ENCODE measurements at regions of chr11 and their contacts with region 1.

Region 1: GRCh38 chr11:83819933-83820549 is 533.9 kb upstream of the CCDC90B start:
- DNase-seq: peak; percentile 90
- H3K4me3 ChIP-seq: no peak overlapping the region
- H3K27ac ChIP-seq: peak overlapping the region; percentile 39
- H3K4me1 ChIP-seq: peaks cover 38% of the 10 kb centered on the region
- H3K27me3 ChIP-seq: no peaks in the 10 kb centered on the region
- CTCF ChIP-seq: peak; percentile 87

Region 2: DNA sequence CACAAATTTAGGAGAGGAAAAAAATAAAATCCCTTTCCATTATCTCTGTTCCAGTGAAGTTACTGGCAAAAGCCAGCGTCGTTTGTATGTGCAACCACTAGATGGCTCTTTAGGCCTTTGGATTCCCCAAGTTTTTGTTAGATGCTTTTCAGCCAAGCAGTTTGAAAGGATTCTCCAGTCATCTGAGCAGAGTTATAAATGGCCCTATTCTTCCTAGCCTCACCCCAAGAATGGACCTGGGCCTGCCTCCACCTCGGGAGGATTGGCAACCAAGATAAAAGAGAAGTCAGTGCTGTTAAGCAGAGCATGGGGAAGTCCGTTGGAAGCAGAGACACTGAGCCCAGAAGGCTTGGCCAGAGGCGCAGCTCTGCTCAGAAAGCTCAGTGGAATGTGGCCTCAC is 1101.7 kb before region 1 on chr11:
- CTCF ChIA-PET with region 1: no interaction called
- POLR2A ChIA-PET with region 1: no interaction called
- intact Hi-C with region 1: loop called (anchors 2 kb)
- DNase-seq: peak; percentile 69
- H3K4me3 ChIP-seq: no peak overlapping the region
- H3K27ac ChIP-seq: no peak overlapping the region
- H3K4me1 ChIP-seq: no peaks in the 10 kb centered on the region
- H3K27me3 ChIP-seq: peaks cover 1% of the 10 kb centered on the region
- CTCF ChIP-seq: peak; percentile 87

Region 3: DNA sequence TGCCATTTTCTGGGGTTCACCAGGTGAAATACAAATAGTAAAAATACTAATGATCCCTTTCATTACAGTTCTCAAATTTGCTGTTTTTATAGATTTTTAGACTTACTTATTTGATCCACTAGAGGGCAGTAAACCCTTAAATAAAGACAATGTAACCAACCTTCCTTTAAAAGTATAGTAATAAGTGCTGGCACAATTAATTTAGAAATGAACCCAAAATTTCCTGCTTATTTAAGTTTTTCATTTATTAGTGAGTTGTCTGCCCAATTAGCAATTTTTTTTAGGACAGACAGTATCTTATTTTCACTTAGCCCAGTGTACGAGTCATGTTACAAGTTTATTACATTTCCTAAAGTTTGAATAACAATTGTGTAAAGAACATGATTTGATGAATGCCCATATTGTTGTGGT is 913.8 kb before region 1 on chr11:
- CTCF ChIA-PET with region 1: interaction called, 7 read pairs
- POLR2A ChIA-PET with region 1: no interaction called
- intact Hi-C with region 1: loop called (anchors 1 kb)
- DNase-seq: peak; percentile 71
- H3K4me3 ChIP-seq: peak overlapping the region; percentile 6
- H3K27ac ChIP-seq: peak overlapping the region; percentile 3
- H3K4me1 ChIP-seq: peaks cover 26% of the 10 kb centered on the region
- H3K27me3 ChIP-seq: no peaks in the 10 kb centered on the region
- CTCF ChIP-seq: peak; percentile 76

Region 4: GRCh38 chr11:83193315-83194280 is 626.4 kb before region 1 on chr11 and contains the start of gene ANKRD42:
- CTCF ChIA-PET with region 1: no interaction called
- POLR2A ChIA-PET with region 1: no interaction called
- intact Hi-C with region 1: loop called (anchors 1 kb)
- DNase-seq: peak; percentile 99
- H3K4me3 ChIP-seq: peak within 1 kb of the TSS; percentile 90
- H3K27ac ChIP-seq: peak within 1 kb of the TSS; percentile 91
- H3K4me1 ChIP-seq: peaks cover 7% of the 10 kb centered on the region
- H3K27me3 ChIP-seq: no peaks in the 10 kb centered on the region
- CTCF ChIP-seq: no peak
- total RNA-seq, gene ANKRD42: 11.0 and 11.3 TPM in 2 replicates

Region 5: GRCh38 chr11:83285771-83286528 is 534.1 kb before region 1 on chr11 and contains the start of gene CCDC90B:
- CTCF ChIA-PET with region 1: no interaction called
- POLR2A ChIA-PET with region 1: no interaction called
- intact Hi-C with region 1: loop called (anchors 5 kb)
- DNase-seq: peak; percentile 100
- H3K4me3 ChIP-seq: peak within 1 kb of the TSS; percentile 71
- H3K27ac ChIP-seq: peak within 1 kb of the TSS; percentile 94
- H3K4me1 ChIP-seq: peaks cover 33% of the 10 kb centered on the region
- H3K27me3 ChIP-seq: no peaks in the 10 kb centered on the region
- CTCF ChIP-seq: peak; percentile 74; the same call in 1 of the 2 replicates
- total RNA-seq, gene CCDC90B: 51.2 and 51.6 TPM in 2 replicates

Region 6: DNA sequence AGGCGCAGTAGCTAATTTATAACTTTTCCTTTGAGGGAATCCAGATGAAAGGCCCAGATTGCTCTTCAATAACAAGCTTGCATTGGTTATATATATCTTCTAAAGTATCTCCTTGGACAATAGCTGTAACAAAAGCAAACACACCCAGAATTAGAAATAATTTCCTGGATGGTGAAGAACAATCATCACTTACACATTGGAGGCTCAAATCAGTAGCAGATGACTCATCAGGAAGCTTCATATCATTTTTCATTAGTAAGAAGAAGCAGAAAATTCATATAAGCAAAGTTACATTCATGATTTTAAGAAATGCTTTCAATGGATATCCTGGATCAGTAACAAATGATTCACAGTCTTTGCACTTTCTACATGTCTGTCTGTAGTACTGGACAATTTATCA is 360.2 kb before region 1 on chr11:
- CTCF ChIA-PET with region 1: no interaction called
- POLR2A ChIA-PET with region 1: no interaction called
- intact Hi-C with region 1: loop called (anchors 10 kb)
- DNase-seq: peak; percentile 49
- H3K4me3 ChIP-seq: no peak overlapping the region
- H3K27ac ChIP-seq: peak overlapping the region; percentile 59
- H3K4me1 ChIP-seq: peaks cover 25% of the 10 kb centered on the region
- H3K27me3 ChIP-seq: no peaks in the 10 kb centered on the region
- CTCF ChIP-seq: no peak

Region 7: GRCh38 chr11:83736689-83737088 is 83.4 kb before region 1 on chr11:
- CTCF ChIA-PET with region 1: interaction called, 5 read pairs
- POLR2A ChIA-PET with region 1: interaction called, 4 read pairs
- intact Hi-C with region 1: loop called (anchors 1 kb)
- DNase-seq: peak; percentile 90
- H3K4me3 ChIP-seq: no peak overlapping the region
- H3K27ac ChIP-seq: peak overlapping the region; percentile 97
- H3K4me1 ChIP-seq: peaks cover 81% of the 10 kb centered on the region
- H3K27me3 ChIP-seq: no peaks in the 10 kb centered on the region
- CTCF ChIP-seq: peak; percentile 51; the same call in 1 of the 2 replicates

Region 8: GRCh38 chr11:84261707-84262106 is 441.7 kb after region 1 on chr11:
- CTCF ChIA-PET with region 1: no interaction called
- POLR2A ChIA-PET with region 1: no interaction called
- intact Hi-C with region 1: no loop called
- DNase-seq: peak; percentile 24
- H3K4me3 ChIP-seq: no peak overlapping the region
- H3K27ac ChIP-seq: no peak overlapping the region
- H3K4me1 ChIP-seq: no peaks in the 10 kb centered on the region
- H3K27me3 ChIP-seq: peaks cover 13% of the 10 kb centered on the region
- CTCF ChIP-seq: peak; percentile 58

Region 9: DNA sequence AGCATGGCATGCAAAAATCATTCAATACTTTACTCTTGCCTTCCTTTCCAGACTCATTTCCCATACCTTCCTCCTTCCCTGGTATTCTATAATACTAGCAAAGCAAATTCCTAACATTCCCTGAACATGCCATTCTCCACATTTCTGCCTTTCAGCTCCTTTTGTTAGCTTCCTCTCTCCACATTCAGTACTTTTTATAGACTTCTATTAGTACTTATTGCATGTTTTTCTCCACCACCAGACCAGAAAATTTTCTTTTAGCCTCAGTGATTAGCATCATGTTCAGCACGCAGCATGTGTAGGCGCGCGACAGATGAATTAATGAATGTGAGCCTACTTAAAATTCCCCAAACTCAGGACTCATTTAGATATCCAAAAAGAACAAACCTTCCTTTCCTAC is 871.8 kb after region 1 on chr11:
- CTCF ChIA-PET with region 1: no interaction called
- POLR2A ChIA-PET with region 1: no interaction called
- intact Hi-C with region 1: no loop called
- DNase-seq: no peak
- H3K4me3 ChIP-seq: no peak overlapping the region
- H3K27ac ChIP-seq: no peak overlapping the region
- H3K4me1 ChIP-seq: no peaks in the 10 kb centered on the region
- H3K27me3 ChIP-seq: no peaks in the 10 kb centered on the region
- CTCF ChIP-seq: no peak

Measured in A673 (cell line).